ENCODE measurements at regions of chr12 and their contacts with region 1.

Region 1: DNA sequence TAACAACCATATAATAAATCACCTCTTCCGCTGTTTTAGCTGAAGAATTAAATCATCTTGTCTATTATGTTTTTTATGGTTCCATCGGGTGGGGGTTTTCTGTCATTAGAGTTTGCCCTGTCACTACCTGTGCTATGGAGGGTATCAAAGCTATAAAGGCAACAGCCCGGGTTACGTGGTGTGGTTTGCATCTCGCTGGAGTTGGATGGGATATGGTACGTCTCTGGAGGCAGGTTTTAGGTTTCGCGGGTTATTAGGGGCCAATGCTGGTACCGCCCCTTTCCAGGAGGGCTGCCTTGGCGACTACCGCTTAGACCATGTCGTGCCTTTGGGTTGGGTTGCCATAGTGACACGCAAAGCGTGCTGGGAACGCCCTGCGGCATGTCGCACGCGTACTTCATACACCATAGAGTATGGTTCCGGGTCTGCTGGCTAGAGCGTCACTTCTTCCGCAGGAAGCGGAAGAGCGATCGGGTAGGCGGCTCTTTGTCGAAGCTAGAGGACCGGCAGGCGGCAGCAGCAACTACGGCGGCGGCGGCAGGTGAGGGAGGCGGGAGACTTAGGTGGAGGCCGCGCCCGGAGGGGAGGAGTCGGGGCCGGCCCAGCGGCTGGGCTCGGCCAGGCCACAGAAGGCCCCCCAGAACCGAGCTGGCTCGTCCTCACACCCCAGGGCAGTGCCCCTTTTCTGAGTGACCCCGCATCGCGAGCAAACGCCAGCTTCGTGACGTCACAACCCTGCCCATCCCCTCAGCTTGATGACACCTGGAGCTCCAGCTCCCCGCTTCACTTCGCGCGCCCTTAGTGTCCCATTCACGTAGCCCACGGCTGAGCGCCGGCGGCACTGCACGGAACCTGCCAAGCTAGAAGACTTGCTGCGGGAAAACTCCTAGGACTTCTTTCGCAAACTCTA is at the start of gene ZC3H10:
- DNase-seq: peak; percentile 98
- H3K4me3 Mint-ChIP-seq: peak within 1 kb of the TSS; percentile 99
- H3K27ac Mint-ChIP-seq: peak within 1 kb of the TSS; percentile 99
- H3K4me1 Mint-ChIP-seq: peaks cover 27% of the 10 kb centered on the region
- H3K27me3 Mint-ChIP-seq: no peaks in the 10 kb centered on the region
- total RNA-seq, gene ZC3H10: 7.7 and 9.2 TPM in 2 replicates

Region 2: GRCh38 chr12:55738123-55739024 is 379.7 kb before region 1 on chr12:
- intact Hi-C with region 1: loop called (anchors 5 kb)
- DNase-seq: peak; percentile 69
- H3K4me3 Mint-ChIP-seq: peak overlapping the region; percentile 78
- H3K27ac Mint-ChIP-seq: peak overlapping the region; percentile 74
- H3K4me1 Mint-ChIP-seq: peaks cover 29% of the 10 kb centered on the region
- H3K27me3 Mint-ChIP-seq: no peaks in the 10 kb centered on the region

Region 3: GRCh38 chr12:55996715-55997534 is 121.1 kb before region 1 on chr12 and contains the start of gene SUOX:
- intact Hi-C with region 1: loop called (anchors 5 kb)
- DNase-seq: peak; percentile 54
- H3K4me3 Mint-ChIP-seq: peak within 1 kb of the TSS; percentile 84
- H3K27ac Mint-ChIP-seq: peak within 1 kb of the TSS; percentile 46
- H3K4me1 Mint-ChIP-seq: peaks cover 24% of the 10 kb centered on the region
- H3K27me3 Mint-ChIP-seq: no peaks in the 10 kb centered on the region
- total RNA-seq, gene SUOX: 19.9 and 21.2 TPM in 2 replicates

Region 4: GRCh38 chr12:56034589-56035332 is 83.3 kb before region 1 on chr12:
- intact Hi-C with region 1: no loop called
- DNase-seq: no peak
- H3K4me3 Mint-ChIP-seq: peak overlapping the region; percentile 3
- H3K27ac Mint-ChIP-seq: peak overlapping the region; percentile 46
- H3K4me1 Mint-ChIP-seq: peaks cover 46% of the 10 kb centered on the region
- H3K27me3 Mint-ChIP-seq: no peaks in the 10 kb centered on the region

Region 5: GRCh38 chr12:56127888-56128669 is 10.0 kb after region 1 on chr12 and contains the start of gene ESYT1:
- intact Hi-C with region 1: loop called (anchors 1 kb)
- DNase-seq: peak; percentile 99
- H3K4me3 Mint-ChIP-seq: peak within 1 kb of the TSS; percentile 98
- H3K27ac Mint-ChIP-seq: peak within 1 kb of the TSS; percentile 91
- H3K4me1 Mint-ChIP-seq: peaks cover 52% of the 10 kb centered on the region
- H3K27me3 Mint-ChIP-seq: no peaks in the 10 kb centered on the region
- total RNA-seq, gene ESYT1: 154 TPM in 2 replicates

Region 6: GRCh38 chr12:56189176-56189917 is 71.3 kb after region 1 on chr12 and contains the start of gene SMARCC2:
- intact Hi-C with region 1: loop called (anchors 1 kb)
- DNase-seq: peak; percentile 81
- H3K4me3 Mint-ChIP-seq: peak within 1 kb of the TSS; percentile 98
- H3K27ac Mint-ChIP-seq: peak within 1 kb of the TSS; percentile 98
- H3K4me1 Mint-ChIP-seq: peaks cover 38% of the 10 kb centered on the region
- H3K27me3 Mint-ChIP-seq: no peaks in the 10 kb centered on the region
- total RNA-seq, gene SMARCC2: 131 and 136 TPM in 2 replicates

Region 7: GRCh38 chr12:56315622-56316473 is 197.8 kb after region 1 on chr12 and contains the start of gene CNPY2:
- intact Hi-C with region 1: loop called (anchors 5 kb)
- DNase-seq: peak; percentile 88
- H3K4me3 Mint-ChIP-seq: peak within 1 kb of the TSS; percentile 99
- H3K27ac Mint-ChIP-seq: peak within 1 kb of the TSS; percentile 98
- H3K4me1 Mint-ChIP-seq: peaks cover 6% of the 10 kb centered on the region
- H3K27me3 Mint-ChIP-seq: no peaks in the 10 kb centered on the region
- total RNA-seq, gene CNPY2: 160 and 165 TPM in 2 replicates